ENCODE measurements at regions of chrX and their contacts with region 1.

Region 1: DNA sequence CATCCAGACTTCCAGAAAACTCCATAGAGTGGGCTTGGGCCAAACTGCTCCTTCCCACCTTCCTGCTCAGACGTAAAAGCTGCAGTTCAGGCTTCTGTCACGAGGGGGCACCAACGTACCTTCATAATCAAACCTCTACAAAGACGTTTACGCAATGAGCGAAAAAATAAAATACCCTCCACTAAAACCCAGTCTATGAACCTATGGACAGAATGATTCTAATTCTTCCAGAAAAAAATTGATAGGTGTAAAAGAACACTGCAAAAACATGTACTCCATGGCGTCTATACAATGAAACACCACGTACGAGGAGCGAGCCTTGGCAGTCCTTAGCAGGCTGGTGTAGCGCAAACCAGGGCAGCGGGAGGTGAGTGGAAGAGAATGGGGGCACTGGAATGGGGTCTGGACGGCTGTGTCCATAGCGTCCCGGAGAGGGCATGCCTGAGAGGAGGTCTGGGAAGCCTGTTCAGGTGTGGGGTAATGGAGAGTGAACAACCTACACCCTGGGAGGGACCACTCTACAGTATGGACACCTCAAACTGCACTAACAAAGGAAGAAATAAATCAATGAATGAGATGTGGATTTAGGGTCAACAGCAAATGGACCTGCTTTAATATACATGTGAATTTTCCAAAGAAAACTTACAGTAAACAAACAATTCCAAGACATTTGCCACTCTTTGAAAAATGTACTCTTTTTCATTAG is 14.4 kb upstream of the RAB40A start:
- DNase-seq: peak; percentile 51 to 67 (median 64)
- ATAC-seq: peak; percentile 85 to 94 (median 94)
- H3K4me3 ChIP-seq: peak overlapping the region; percentile 2 to 45 (median 35)
- H3K27ac ChIP-seq: no peak overlapping the region
- H3K4me1 ChIP-seq: no peaks in the 10 kb centered on the region
- H3K27me3 ChIP-seq: no peaks in the 10 kb centered on the region
- CTCF ChIP-seq: peak; percentile 77 to 86 (median 78)
- POLR2A ChIP-seq: no peak

Region 2: DNA sequence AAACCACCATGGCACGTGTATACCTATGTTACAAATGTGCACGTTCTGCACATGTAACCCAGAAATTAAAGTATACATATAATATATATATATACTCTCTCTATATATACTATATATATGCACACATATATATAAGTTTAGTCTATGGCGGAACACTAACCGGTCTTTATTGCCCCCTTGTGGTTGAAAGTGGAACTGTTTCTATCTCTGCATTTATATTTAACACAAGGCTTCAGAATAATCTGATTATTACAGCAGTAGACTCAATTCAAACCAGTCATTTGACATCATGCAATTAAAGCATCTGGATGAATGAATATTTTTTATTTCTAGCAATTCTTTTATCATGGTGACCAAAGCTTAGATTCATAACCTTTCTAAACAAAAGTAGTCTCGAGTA is 283.8 kb after region 1 on chrX:
- intact Hi-C with region 1: loop called in 1 of 2 experiments (anchors 10 kb)
- DNase-seq: no peak
- ATAC-seq: peak; percentile 52 to 76 (median 65)
- H3K4me3 ChIP-seq: no peak overlapping the region
- H3K27ac ChIP-seq: no peak overlapping the region
- H3K4me1 ChIP-seq: no peaks in the 10 kb centered on the region
- H3K27me3 ChIP-seq: no peaks in the 10 kb centered on the region
- CTCF ChIP-seq: peak; percentile 53 to 89 (median 82)
- POLR2A ChIP-seq: no peak

Measured in right lobe of liver (tissue), 6 donors.